A549 (cell line): ENCODE measurements at regions of chr12 and their contacts with region 1.

Region 1: GRCh38 chr12:53518381-53518780 is 11.1 kb upstream of the NPFF start:
- DNase-seq: no peak
- ATAC-seq: no peak
- H3K4me3 ChIP-seq: no peak overlapping the region
- H3K27ac ChIP-seq: no peak overlapping the region
- H3K4me1 ChIP-seq: no peaks in the 10 kb centered on the region
- CTCF ChIP-seq: no peak
- EP300 ChIP-seq: no peak
- POLR2A ChIP-seq: no peak
- RAD21 ChIP-seq: no peak

Region 2: DNA sequence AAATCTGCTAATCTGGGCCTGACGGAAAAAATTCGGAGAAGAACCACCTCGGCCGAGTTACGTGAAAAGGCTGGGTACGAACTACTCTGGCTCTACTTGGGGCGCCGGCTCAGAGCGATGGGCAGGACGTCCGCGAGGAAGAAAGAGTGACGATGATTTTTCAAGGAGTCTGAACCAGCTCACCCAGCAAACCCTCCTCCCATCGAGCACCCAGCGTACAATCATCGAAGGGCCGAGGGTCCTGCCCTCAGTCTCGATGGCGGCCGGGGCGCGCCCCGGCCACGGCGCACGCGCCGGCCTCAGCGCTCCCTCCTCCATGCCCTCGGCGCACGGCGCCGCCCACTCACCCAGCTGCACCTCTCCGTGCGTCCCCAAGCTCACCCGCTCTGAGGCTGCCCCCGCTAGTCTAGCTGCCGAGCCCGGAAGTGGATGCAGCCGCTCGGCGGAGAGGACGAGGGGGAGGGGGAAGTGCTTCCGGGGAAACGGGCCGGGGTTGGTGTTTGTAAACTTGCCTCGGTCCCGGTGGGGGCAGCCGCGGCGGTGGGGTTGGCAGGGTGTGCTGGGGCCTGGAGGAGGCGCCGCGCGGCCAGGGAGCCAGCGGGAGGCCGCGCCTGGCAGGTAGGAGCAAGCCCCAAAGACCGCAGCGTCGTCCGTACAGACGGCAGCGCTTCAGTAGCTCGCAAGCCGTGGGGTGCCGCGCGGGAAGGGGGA is 338.0 kb before region 1 on chr12 and contains the starts of genes CSAD and ZNF740:
- CTCF ChIA-PET with region 1: no interaction called
- POLR2A ChIA-PET with region 1: no interaction called
- DNase-seq: peak; percentile 98 to 99
- ATAC-seq: peak; percentile 97 to 98
- H3K4me3 ChIP-seq: peak within 1 kb of the TSS; percentile 76
- H3K27ac ChIP-seq: peak within 1 kb of the TSS; percentile 92 to 93
- H3K4me1 ChIP-seq: peaks cover 39% of the 10 kb centered on the region
- CTCF ChIP-seq: no peak
- EP300 ChIP-seq: no peak; a peak in 1 of 5 replicates
- POLR2A ChIP-seq: peak; percentile 90
- RAD21 ChIP-seq: 0 out of 5 replicates have a peak, but pooled peaks of 1 of the 2 experiments have one; percentile 14
- polyA plus RNA-seq, gene CSAD: 16.5 and 19.2 TPM in 2 replicates
- polyA plus RNA-seq, gene ZNF740: 28.8 and 32.9 TPM in 2 replicates

Region 3: GRCh38 chr12:53451661-53452158 is 66.7 kb before region 1 on chr12 and contains the start of gene PCBP2:
- CTCF ChIA-PET with region 1: no interaction called
- POLR2A ChIA-PET with region 1: no interaction called
- DNase-seq: peak; percentile 99 to 100
- ATAC-seq: peak; percentile 94 to 96
- H3K4me3 ChIP-seq: peak within 1 kb of the TSS; percentile 88
- H3K27ac ChIP-seq: peak within 1 kb of the TSS; percentile 98 to 99
- H3K4me1 ChIP-seq: peaks cover 23% of the 10 kb centered on the region
- CTCF ChIP-seq: peak; percentile 66
- EP300 ChIP-seq: no peak
- POLR2A ChIP-seq: peak; percentile 72
- RAD21 ChIP-seq: peak; percentile 29 to 46; a peak in 3 of 5 replicates
- polyA plus RNA-seq, gene PCBP2: 367 and 604 TPM in 2 replicates

Region 4: DNA sequence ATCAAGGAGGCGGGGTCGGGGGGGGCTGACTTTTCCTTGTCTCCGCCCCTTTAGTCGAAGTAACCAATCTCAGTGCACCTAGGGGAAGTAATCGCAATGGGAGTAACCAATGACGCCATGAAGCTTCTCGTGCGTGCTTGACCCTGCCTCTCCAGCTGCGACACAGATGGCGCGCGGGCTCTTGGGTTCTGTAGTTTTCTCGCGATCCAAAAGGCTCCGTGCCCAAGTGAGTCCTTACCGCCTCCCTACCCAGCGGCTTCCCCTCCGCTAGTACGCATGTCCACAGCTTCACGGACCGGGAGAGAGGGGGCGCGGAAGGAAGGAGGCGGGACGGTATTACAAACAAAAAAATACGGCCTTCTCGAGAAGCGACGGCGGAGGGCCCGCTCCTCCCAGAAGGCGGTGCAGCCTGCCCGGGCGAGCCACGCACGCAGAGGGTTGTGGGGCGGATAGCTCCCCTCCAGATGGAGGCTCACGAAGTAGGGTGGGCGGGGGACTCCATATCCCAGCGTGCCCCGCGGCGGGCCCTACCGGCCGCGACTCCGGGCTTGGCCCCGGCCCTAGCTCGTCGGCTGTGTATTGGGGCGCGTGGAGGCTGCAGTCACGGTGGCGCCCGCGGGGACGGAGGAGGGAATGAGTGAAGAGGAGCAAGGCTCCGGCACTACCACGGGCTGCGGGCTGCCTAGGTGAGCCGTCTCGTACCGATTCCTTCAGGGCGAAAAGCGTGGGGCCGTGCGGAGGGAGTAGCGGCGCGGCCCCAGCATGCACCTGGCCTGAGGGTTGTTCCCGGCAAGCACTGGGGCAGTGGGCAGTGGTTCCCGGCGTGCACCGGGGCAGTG is 17.4 kb before region 1 on chr12 and contains the start of gene TARBP2:
- CTCF ChIA-PET with region 1: interaction called, 104 read pairs
- POLR2A ChIA-PET with region 1: interaction called, 7 read pairs
- DNase-seq: peak; percentile 96 to 100
- ATAC-seq: peak; percentile 73 to 82
- H3K4me3 ChIP-seq: peak within 1 kb of the TSS; percentile 64
- H3K27ac ChIP-seq: peak within 1 kb of the TSS; percentile 94 to 96
- H3K4me1 ChIP-seq: peaks cover 45% of the 10 kb centered on the region
- CTCF ChIP-seq: no peak
- EP300 ChIP-seq: no peak
- POLR2A ChIP-seq: peak; percentile 72
- RAD21 ChIP-seq: no peak
- polyA plus RNA-seq, gene TARBP2: 41.5 and 51.2 TPM in 2 replicates

Region 5: DNA sequence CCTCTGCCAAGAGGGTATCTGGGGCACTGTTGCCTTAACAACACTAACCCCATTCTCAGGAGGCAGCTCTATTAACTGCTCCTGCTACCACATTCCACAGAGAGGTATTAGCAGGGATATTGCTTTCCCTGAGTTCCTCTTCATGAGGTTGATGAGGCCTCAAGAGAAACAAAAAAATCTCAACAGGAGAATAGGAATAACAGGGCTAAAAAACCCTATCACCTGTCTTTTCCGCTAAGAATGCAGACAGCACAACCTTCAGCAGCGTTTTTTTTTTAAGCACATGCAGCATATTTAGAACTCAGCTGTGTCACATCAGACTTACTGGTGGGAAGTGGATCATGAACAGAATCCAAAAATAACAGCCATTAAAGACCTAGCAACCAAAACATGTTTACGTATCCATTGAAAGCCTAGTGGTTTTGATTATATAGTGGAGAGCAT is 78.6 kb after region 1 on chr12:
- CTCF ChIA-PET with region 1: no interaction called
- POLR2A ChIA-PET with region 1: no interaction called
- DNase-seq: no peak
- ATAC-seq: no peak
- H3K4me3 ChIP-seq: no peak overlapping the region
- H3K27ac ChIP-seq: no peak overlapping the region
- H3K4me1 ChIP-seq: peaks cover 8% of the 10 kb centered on the region; the same call in 2 of the 3 replicates
- CTCF ChIP-seq: no peak
- EP300 ChIP-seq: no peak
- POLR2A ChIP-seq: no peak
- RAD21 ChIP-seq: no peak